ENCODE measurements at regions of chr13 and their contacts with region 1.

Region 1: DNA sequence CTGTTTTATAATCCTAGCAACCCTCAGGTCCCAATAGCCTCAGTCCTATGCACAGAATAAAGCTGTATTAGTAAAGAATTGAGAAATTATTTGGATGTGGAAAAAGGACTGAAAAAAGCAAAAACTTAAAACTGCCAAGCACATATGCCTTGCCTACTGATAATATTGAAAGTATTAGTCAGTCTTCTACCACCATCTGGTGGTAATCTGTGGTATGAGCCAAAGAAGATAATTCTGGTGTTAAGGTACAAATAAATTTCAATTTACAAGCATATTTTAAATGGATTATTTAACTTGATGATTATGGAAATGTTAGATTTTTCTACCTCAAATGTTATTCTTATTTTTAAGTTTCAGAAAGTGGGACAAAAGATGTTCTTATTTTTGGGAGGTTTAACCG is 460.3 kb upstream of the KLHL1 start:
- DNase-seq: peak in 1 of 2 donors; percentile 73
- H3K4me3 ChIP-seq: no peak overlapping the region
- H3K27ac ChIP-seq: no peak overlapping the region
- H3K4me1 ChIP-seq: no peaks in the 10 kb centered on the region
- H3K27me3 ChIP-seq: no peaks in the 10 kb centered on the region
- CTCF ChIP-seq: peak in 5 of 7 experiments; percentile 22 to 72 (median 46)
- EP300 ChIP-seq: no peak
- POLR2A ChIP-seq: no peak

Region 2: GRCh38 chr13:70117338-70117905 is 451.1 kb before region 1 on chr13:
- intact Hi-C with region 1: no loop called
- DNase-seq: peak in 1 of 2 donors; percentile 25
- H3K4me3 ChIP-seq: no peak overlapping the region
- H3K27ac ChIP-seq: no peak overlapping the region
- H3K4me1 ChIP-seq: no peaks in the 10 kb centered on the region
- H3K27me3 ChIP-seq: no peaks in the 10 kb centered on the region
- CTCF ChIP-seq: no peak
- EP300 ChIP-seq: no peak
- POLR2A ChIP-seq: no peak

Region 3: GRCh38 chr13:70339738-70340137 is 228.8 kb before region 1 on chr13:
- intact Hi-C with region 1: loop called (anchors 10 kb)
- DNase-seq: peak in 1 of 2 donors; percentile 28
- H3K4me3 ChIP-seq: no peak overlapping the region
- H3K27ac ChIP-seq: no peak overlapping the region
- H3K4me1 ChIP-seq: no peaks in the 10 kb centered on the region
- H3K27me3 ChIP-seq: no peaks in the 10 kb centered on the region
- CTCF ChIP-seq: peak in 4 of 7 experiments; percentile 20 to 44 (median 41)
- EP300 ChIP-seq: no peak
- POLR2A ChIP-seq: no peak

Region 4: DNA sequence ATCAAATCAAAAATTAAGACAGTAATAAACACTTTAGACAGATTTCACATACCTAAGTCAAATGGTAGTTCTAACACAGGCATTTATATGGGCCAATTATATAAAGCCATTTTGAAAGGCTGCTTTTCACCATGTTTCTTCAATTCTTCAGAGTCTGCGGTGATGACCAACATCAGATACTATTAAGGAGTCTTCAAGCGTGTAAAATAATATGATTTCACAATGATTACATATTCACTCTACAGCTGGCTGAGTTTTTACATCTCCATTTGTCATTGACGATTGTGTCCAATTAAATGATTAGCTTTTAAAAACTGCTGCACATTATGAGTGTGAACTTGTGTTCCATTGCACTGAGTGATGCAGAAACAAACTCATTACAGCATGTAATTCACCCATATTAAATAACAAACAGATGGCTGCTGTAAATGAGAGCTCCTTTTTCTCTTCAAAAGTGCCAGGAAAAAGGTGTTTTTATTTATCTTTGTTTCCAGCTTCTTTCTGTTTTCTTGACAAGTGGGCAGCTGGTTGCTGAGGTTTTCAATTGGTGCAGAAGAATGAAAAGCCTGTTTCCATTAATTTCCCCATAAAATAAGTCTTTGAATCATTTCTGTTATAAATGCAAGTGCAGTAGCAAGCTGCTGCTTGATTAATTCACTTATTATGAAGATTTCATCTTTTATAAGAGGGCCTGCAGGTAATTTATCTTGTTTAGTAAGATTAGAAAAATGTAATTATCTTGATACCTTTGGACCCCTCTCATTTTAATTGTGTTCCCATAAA is 215.8 kb after region 1 on chr13:
- intact Hi-C with region 1: no loop called
- DNase-seq: peak in 1 of 2 donors; percentile 29
- H3K4me3 ChIP-seq: no peak overlapping the region
- H3K27ac ChIP-seq: no peak overlapping the region
- H3K4me1 ChIP-seq: no peaks in the 10 kb centered on the region
- H3K27me3 ChIP-seq: no peaks in the 10 kb centered on the region
- CTCF ChIP-seq: no peak
- EP300 ChIP-seq: no peak
- POLR2A ChIP-seq: no peak

Measured in stomach (tissue), 19 donors.